ENCODE measurements at regions of chr17 and their contacts with region 1.

Region 1: GRCh38 chr17:10762037-10762436 is 32.2 kb upstream of the TMEM220 start:
- DNase-seq: no peak
- ATAC-seq: no peak
- H3K4me3 ChIP-seq: no peak overlapping the region
- H3K4me3 Mint-ChIP-seq: no peak overlapping the region
- H3K27ac ChIP-seq: no peak overlapping the region
- H3K27ac Mint-ChIP-seq: no peak overlapping the region
- H3K4me1 ChIP-seq: no peaks in the 10 kb centered on the region
- H3K4me1 Mint-ChIP-seq: no peaks in the 10 kb centered on the region
- H3K27me3 ChIP-seq: no peaks in the 10 kb centered on the region
- H3K27me3 Mint-ChIP-seq: no peaks in the 10 kb centered on the region
- CTCF ChIP-seq: no peak

Region 2: DNA sequence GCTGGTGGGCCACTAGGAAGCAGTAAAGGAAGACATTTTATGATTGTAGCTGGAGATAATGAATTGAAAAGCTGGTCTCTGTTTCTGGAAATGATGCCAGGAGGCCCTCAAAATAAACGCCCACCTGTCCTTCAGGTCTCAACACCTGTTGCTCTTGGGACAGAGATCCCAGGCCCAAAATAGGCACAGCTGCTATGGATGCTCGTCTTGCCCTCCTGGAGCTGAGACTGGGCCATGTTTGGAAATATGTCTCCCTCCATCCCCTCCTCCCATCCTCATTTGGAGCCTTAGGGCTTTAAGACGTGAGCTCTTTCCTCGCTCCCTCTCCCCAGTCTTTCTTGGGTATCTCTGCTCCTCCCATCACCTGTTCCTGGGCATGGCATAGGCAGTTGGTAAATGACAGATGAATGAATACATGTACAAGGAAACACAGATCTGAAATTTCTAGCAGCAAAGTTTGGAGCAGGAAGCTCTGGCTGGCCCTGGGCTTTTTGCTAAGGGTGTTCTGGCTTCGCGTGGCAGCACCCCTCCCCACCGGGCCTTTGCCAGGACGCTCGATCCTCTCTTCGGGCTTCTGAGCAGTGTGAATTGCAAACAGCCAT is 138.2 kb before region 1 on chr17:
- CTCF ChIA-PET with region 1: no interaction called
- POLR2A ChIA-PET with region 1: no interaction called
- intact Hi-C with region 1: no loop called
- DNase-seq: no peak
- ATAC-seq: no peak
- H3K4me3 ChIP-seq: no peak overlapping the region
- H3K4me3 Mint-ChIP-seq: no peak overlapping the region
- H3K27ac ChIP-seq: no peak overlapping the region
- H3K27ac Mint-ChIP-seq: no peak overlapping the region
- H3K4me1 ChIP-seq: no peaks in the 10 kb centered on the region
- H3K4me1 Mint-ChIP-seq: no peaks in the 10 kb centered on the region
- H3K27me3 ChIP-seq: no peaks in the 10 kb centered on the region
- H3K27me3 Mint-ChIP-seq: no peaks in the 10 kb centered on the region
- CTCF ChIP-seq: no peak

Region 3: DNA sequence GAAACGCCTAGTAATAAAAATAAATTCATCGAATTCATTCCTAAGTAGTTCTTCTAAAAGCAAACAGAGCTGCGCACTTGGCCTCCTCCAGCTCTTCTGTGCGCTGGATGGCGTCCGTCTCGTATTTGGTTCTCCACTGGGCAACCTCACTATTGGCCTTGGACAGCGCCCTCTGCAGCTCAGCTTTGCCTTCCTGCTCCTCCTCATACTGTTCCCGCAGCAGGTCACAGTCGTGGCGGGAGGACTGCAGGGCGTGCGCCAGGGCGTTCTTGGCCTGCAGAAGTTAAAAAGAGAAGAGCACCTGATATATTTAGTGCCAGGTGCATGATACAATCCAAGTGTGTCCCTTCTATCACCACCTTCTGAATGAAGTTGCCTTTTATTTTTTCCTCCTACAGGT is 126.7 kb before region 1 on chr17:
- CTCF ChIA-PET with region 1: no interaction called
- POLR2A ChIA-PET with region 1: no interaction called
- intact Hi-C with region 1: no loop called
- DNase-seq: no peak
- ATAC-seq: no peak
- H3K4me3 ChIP-seq: no peak overlapping the region
- H3K4me3 Mint-ChIP-seq: no peak overlapping the region
- H3K27ac ChIP-seq: no peak overlapping the region
- H3K27ac Mint-ChIP-seq: no peak overlapping the region
- H3K4me1 ChIP-seq: no peaks in the 10 kb centered on the region
- H3K4me1 Mint-ChIP-seq: no peaks in the 10 kb centered on the region
- H3K27me3 ChIP-seq: no peaks in the 10 kb centered on the region
- H3K27me3 Mint-ChIP-seq: no peaks in the 10 kb centered on the region
- CTCF ChIP-seq: no peak

Region 4: DNA sequence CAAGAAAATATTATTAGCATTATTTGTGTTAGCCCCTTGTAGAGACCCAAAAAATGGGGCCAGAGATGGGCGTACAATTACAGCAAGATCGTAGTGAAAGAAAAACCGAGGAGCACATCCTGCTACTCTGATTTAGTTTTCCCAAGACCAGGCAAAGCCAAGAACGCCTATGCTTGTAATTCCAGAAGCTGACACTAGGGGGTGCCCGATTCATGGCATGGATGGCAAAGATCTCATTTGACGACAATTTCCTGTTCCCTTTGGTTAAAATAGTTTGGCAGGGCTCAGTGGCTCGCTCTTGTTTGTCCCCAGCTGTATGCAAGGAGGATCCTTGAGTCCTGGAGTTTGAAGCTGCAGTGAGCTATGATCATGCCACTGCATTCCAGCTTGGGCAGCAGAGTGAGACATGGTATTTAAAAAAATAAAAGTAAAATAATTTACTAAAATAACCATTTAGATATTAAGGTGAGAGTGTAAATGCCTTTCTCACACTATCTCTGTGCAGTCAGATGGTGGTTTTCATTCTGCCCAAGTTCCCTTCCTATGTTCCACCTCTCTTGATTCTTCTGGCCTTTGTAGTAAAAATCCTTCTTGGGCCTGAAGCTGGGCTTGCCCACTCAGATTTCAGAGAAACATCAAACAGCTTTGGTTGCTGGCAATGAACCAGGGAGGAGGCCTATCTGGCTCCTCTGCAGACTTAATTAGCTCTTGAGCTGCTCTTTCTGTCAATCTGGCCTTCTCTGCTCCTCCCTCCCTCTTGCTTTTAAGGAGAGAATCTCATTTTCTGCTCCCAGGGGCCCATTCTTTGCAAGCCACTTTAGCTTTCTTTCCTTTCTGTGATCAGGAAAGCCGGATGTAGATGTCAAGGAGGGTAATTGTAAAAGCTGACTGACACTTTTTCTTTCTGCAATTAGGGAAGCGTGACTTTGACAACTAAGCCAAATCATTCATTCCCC is 10.7 kb after region 1 on chr17:
- CTCF ChIA-PET with region 1: interaction called, 13 read pairs
- POLR2A ChIA-PET with region 1: no interaction called
- intact Hi-C with region 1: no loop called
- DNase-seq: peak in 3 of 9 experiments; percentile 14 to 41 (median 30)
- ATAC-seq: no peak
- H3K4me3 ChIP-seq: no peak overlapping the region
- H3K4me3 Mint-ChIP-seq: no peak overlapping the region
- H3K27ac ChIP-seq: no peak overlapping the region
- H3K27ac Mint-ChIP-seq: no peak overlapping the region
- H3K4me1 ChIP-seq: no peaks in the 10 kb centered on the region
- H3K4me1 Mint-ChIP-seq: no peaks in the 10 kb centered on the region
- H3K27me3 ChIP-seq: no peaks in the 10 kb centered on the region
- H3K27me3 Mint-ChIP-seq: no peaks in the 10 kb centered on the region
- CTCF ChIP-seq: peak; percentile 70